Heart right ventricle (tissue), 16 donors: ENCODE measurements at regions of chr1 and their contacts with region 1.

Region 1: DNA sequence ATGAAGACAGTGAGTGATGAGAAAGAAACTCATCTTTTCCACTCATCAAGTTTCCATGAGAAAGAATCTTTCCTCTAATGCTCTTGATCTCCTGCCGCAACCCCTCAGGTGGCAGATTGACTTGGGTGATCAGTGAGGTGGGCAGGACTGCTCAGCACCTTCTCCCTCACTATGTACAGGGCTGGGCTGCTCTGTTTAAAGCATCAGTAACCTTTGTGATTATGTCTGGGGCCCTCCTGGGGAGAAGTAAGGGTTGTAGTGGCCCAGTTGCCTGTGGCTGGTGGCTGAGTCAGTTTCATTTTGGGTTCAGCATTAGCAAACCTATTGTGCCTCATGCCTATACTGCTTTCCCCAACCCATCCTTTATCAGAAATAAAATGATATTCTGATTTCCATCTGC is 366.0 kb downstream of the TTLL7 start:
- DNase-seq: no peak
- ATAC-seq: no peak
- H3K4me3 ChIP-seq: no peak overlapping the region
- H3K27ac ChIP-seq: no peak overlapping the region
- H3K4me1 ChIP-seq: no peaks in the 10 kb centered on the region
- H3K27me3 ChIP-seq: no peaks in the 10 kb centered on the region
- CTCF ChIP-seq: no peak

Region 2: GRCh38 chr1:84735483-84735882 is 1102.6 kb after region 1 on chr1:
- intact Hi-C with region 1: loop called in 1 of 10 experiments (anchors 5 kb)
- DNase-seq: no peak
- ATAC-seq: no peak
- H3K4me3 ChIP-seq: no peak overlapping the region
- H3K27ac ChIP-seq: no peak overlapping the region
- H3K4me1 ChIP-seq: no peaks in the 10 kb centered on the region
- H3K27me3 ChIP-seq: peaks cover 0 to 21% (median 0%) of the 10 kb centered on the region in 7 donors
- CTCF ChIP-seq: no peak